Posterior cingulate gyrus (tissue), 11 donors: ENCODE measurements at regions of chr18 and their contacts with region 1.

Region 1: GRCh38 chr18:13726232-13726971 is at the starts of genes FAM210A and RNMT:
- DNase-seq: peak; percentile 94 to 99 (median 96)

Region 2: DNA sequence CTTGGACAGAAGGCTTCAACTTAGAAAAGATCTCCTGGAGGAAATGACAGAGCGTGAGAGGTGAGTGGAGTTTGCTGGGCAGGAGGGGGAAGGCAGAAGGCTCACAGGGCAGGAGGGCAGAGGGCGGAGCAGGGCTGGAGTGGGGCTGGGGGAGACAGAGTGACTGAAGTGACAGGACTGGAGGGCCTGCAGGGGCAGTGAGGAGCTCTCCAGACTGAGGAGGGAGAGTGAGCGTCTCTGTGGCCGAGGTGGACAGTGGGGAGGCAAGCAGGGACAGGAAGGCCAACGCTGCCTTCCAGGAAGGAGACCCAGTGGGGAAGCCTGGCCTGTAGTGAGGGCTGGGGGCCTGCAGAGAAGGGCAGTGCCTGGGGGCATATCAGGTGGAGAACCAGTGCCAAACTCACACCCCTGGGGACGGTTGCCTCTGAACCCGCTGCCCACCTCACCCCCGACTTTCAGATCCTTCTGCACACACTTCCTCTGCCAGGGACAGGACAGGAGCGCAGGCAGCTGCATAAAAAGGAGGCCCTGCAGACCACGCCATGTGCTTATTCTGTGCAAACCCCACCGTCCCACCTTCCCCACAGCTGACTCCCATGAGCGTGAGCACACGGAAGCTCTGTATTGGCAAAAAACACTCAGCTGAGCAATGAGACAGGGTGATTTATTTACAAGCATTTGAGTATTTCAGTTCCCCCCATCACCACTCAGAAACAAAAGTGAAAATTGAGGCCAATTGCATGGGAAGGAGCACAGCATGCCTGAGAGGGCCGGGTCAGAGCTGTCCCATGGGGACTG is 244.4 kb before region 1 on chr18:
- intact Hi-C with region 1: no loop called
- DNase-seq: peak in 1 of 10 donors; percentile 73

Region 3: GRCh38 chr18:13629841-13630715 is 96.3 kb before region 1 on chr18:
- intact Hi-C with region 1: loop called (anchors 10 kb)
- DNase-seq: peak in 6 of 10 donors; percentile 67 to 95 (median 70)